Heart right ventricle (tissue), 16 donors: ENCODE measurements at regions of chr15 and their contacts with region 1.

Region 1: GRCh38 chr15:54456413-54456812 is 478.2 kb downstream of the UNC13C start:
- DNase-seq: no peak
- ATAC-seq: no peak
- H3K4me3 ChIP-seq: no peak overlapping the region
- H3K27ac ChIP-seq: no peak overlapping the region
- H3K4me1 ChIP-seq: no peaks in the 10 kb centered on the region
- H3K27me3 ChIP-seq: no peaks in the 10 kb centered on the region
- CTCF ChIP-seq: no peak

Region 2: DNA sequence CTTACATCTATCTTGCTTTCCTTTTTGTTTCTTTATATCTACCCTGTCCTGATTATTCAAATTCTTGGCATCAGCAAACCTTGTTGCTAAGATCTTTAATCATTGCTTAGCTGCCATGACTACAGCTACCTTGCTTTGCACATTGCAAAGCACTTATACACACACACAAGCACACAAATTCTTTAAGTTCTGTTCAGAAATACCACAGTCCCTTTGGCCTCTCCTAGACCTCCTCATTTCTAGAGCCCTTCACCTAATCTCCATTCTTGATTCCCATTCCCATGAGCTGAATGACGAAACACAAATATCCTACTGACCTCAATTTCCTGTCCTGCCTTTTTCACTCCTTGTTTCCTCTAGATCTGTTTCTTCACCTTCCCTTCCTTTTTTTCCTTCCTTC is 68.6 kb before region 1 on chr15:
- intact Hi-C with region 1: loop called in 1 of 10 experiments (anchors 10 kb)
- DNase-seq: no peak
- ATAC-seq: no peak
- H3K4me3 ChIP-seq: no peak overlapping the region
- H3K27ac ChIP-seq: no peak overlapping the region
- H3K4me1 ChIP-seq: no peaks in the 10 kb centered on the region
- H3K27me3 ChIP-seq: no peaks in the 10 kb centered on the region
- CTCF ChIP-seq: no peak

Region 3: DNA sequence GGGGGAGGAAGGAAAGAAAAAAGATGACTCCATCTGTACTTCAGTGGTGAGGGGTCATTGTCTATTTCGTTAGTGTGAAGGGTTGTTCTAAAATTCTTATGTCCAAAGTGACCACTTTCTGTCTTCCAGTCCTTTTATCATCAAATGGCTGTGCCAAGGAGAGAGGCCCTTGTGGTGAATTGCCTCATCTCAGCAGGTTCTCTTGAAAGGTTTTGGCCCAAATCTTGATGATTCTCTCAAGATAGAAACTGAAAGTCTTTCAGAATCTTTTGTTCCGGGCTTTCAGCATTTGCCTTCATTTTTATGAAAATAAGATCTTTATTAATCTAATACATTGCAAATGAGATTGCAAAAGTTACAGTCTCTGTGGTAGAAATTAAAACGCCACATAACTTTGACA is 164.5 kb after region 1 on chr15:
- intact Hi-C with region 1: no loop called
- DNase-seq: no peak
- ATAC-seq: no peak
- H3K4me3 ChIP-seq: no peak overlapping the region
- H3K27ac ChIP-seq: no peak overlapping the region
- H3K4me1 ChIP-seq: no peaks in the 10 kb centered on the region
- H3K27me3 ChIP-seq: no peaks in the 10 kb centered on the region
- CTCF ChIP-seq: no peak